ENCODE measurements at regions of chr11 and their contacts with region 1.

Region 1: GRCh38 chr11:71532036-71532610 is 5.1 kb downstream of the KRTAP5-7 start:
- DNase-seq: no peak
- CTCF ChIP-seq: no peak

Region 2: DNA sequence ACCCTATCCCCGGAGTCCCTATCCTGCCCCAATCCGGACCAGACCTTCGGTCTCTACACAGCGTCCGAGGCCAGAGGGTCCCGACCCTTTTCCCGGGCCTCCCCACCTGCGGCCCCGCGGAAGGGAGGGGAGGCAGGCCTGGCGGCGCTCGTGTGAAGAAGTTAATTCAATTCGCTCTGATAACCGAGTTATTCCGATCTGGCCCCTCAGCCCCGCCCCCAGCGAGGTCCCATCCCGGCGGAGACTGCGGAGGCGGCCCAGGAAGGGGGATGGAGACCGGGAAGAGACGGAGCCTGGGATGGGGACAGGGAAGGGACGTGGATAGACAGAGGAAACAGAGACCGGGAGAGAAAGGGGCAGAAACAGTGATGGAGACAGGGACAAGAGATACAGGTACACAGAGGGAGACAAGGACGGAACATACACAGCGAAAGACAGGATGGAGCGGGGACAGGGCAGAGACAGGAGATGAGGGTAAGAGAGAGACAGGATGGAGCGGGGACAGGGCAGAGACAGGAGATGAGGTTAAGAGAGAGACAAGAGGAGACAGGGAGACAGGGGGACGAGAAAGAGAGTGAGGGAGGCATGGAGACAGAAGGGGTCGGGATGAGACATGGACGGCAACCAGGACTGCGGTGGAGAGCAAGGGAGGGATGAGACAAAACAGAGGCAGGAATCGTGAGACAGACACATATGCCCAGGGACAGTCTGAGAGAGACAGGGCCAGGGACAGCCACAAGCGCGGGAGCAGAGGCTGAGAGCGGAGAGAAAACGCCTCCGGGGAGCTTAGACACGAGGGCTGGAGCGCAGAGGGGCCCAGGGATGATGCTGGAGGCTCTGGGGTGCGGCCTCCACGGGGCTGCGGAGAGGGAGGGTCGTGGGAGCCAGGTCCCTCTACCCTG is 712.5 kb after region 1 on chr11:
- CTCF ChIA-PET with region 1: no interaction called
- POLR2A ChIA-PET with region 1: interaction called, 11 read pairs
- DNase-seq: no peak
- CTCF ChIP-seq: no peak

Measured in GM10248 (cell line).